ENCODE measurements at regions of chr17 and their contacts with region 1.

Region 1: GRCh38 chr17:8894673-8895578 is 27.5 kb upstream of the PIK3R6 start:
- DNase-seq: peak; percentile 66
- ATAC-seq: peak; percentile 82
- H3K4me3 Mint-ChIP-seq: peak overlapping the region; percentile 70
- H3K27ac Mint-ChIP-seq: no peak overlapping the region
- H3K4me1 Mint-ChIP-seq: peaks cover 17% of the 10 kb centered on the region
- H3K27me3 Mint-ChIP-seq: peaks cover 3% of the 10 kb centered on the region; the same call in 1 of the 2 replicates
- CTCF ChIP-seq: peak; percentile 74

Region 2: DNA sequence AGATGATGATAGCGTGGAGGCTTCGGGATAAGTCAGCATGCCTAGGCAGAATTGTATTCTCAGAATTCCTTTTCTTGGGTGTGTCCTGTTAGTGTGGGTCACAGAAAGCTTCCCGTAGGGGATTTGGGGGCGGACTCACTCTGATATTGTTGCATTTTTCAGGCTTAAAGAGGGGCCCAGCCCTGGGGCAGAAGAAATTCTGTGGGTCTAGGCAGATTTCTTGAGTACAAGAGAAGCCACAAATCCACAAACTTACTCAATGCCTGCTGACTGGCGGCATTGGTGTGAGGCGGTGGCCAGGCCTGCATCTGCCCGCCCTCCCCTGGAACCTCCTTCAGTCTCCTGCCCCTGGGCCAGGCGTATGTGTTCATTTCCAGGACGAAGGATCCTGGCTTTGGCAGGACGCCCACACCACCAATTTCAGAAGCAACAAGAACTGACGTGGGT is 167.8 kb before region 1 on chr17:
- CTCF ChIA-PET with region 1: no interaction called
- POLR2A ChIA-PET with region 1: no interaction called
- DNase-seq: no peak
- ATAC-seq: no peak
- H3K4me3 Mint-ChIP-seq: no peak overlapping the region
- H3K27ac Mint-ChIP-seq: no peak overlapping the region
- H3K4me1 Mint-ChIP-seq: peaks cover 2% of the 10 kb centered on the region; the same call in 1 of the 2 replicates
- H3K27me3 Mint-ChIP-seq: no peaks in the 10 kb centered on the region; the same call in 1 of the 2 replicates
- CTCF ChIP-seq: no peak

Region 3: GRCh38 chr17:8798846-8799569 is 95.9 kb before region 1 on chr17 and contains the start of gene MFSD6L:
- CTCF ChIA-PET with region 1: interaction called, 107 read pairs
- POLR2A ChIA-PET with region 1: interaction called, 5 read pairs
- DNase-seq: peak; percentile 88
- ATAC-seq: peak; percentile 96
- H3K4me3 Mint-ChIP-seq: peak within 1 kb of the TSS; percentile 81
- H3K27ac Mint-ChIP-seq: peak within 1 kb of the TSS; percentile 27; the same call in 1 of the 2 replicates
- H3K4me1 Mint-ChIP-seq: peaks cover 23% of the 10 kb centered on the region
- H3K27me3 Mint-ChIP-seq: peaks cover 4% of the 10 kb centered on the region; the same call in 1 of the 2 replicates
- CTCF ChIP-seq: no peak
- total RNA-seq, gene MFSD6L: 4.0 to 5.2 TPM (median 4.5 TPM) in 3 replicates

Region 4: GRCh38 chr17:8806926-8807550 is 87.9 kb before region 1 on chr17:
- CTCF ChIA-PET with region 1: interaction called, 38 read pairs
- POLR2A ChIA-PET with region 1: no interaction called
- DNase-seq: no peak
- ATAC-seq: no peak
- H3K4me3 Mint-ChIP-seq: no peak overlapping the region
- H3K27ac Mint-ChIP-seq: 0 out of 2 replicates have a peak overlapping the region, but pooled peaks have one; percentile 0
- H3K4me1 Mint-ChIP-seq: peaks cover 13% of the 10 kb centered on the region
- H3K27me3 Mint-ChIP-seq: no peaks in the 10 kb centered on the region; the same call in 1 of the 2 replicates
- CTCF ChIP-seq: no peak

Region 5: DNA sequence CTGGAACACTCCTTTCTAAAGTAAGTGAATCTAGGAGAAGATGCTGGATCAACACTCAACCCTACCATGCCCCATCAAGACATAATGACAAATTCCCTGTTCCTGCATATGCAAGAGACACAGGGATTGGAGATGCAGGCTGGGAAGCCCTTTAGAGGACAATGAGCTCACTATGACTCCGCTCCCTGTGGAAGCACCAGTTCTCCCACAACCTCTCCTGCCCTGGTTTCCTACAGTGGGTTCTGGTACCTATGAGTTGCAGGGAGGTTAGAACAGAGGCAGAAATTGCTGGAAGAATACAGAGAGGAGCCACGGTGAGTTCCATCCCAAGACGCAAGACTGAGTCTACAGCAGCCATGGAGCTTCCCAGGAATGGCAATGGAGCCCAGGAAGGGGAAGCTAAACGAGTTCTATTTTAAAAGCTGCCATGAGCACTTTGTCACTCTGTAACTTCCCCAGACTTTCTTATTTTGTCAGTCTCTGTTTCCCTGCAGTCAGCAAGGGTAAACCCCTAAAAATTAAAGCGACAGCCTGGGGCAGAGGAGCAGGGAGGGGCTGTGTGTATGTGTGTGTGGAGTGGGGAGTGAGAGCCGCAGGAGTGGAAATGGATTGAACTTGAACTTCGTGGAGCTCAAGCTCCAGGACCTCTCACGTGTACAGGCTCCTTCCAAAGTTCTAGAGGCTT is 14.8 kb after region 1 on chr17:
- CTCF ChIA-PET with region 1: interaction called, 12 read pairs
- POLR2A ChIA-PET with region 1: no interaction called
- DNase-seq: no peak
- ATAC-seq: no peak
- H3K4me3 Mint-ChIP-seq: no peak overlapping the region
- H3K27ac Mint-ChIP-seq: no peak overlapping the region
- H3K4me1 Mint-ChIP-seq: no peaks in the 10 kb centered on the region
- H3K27me3 Mint-ChIP-seq: no peaks in the 10 kb centered on the region; the same call in 1 of the 2 replicates
- CTCF ChIP-seq: no peak

Region 6: DNA sequence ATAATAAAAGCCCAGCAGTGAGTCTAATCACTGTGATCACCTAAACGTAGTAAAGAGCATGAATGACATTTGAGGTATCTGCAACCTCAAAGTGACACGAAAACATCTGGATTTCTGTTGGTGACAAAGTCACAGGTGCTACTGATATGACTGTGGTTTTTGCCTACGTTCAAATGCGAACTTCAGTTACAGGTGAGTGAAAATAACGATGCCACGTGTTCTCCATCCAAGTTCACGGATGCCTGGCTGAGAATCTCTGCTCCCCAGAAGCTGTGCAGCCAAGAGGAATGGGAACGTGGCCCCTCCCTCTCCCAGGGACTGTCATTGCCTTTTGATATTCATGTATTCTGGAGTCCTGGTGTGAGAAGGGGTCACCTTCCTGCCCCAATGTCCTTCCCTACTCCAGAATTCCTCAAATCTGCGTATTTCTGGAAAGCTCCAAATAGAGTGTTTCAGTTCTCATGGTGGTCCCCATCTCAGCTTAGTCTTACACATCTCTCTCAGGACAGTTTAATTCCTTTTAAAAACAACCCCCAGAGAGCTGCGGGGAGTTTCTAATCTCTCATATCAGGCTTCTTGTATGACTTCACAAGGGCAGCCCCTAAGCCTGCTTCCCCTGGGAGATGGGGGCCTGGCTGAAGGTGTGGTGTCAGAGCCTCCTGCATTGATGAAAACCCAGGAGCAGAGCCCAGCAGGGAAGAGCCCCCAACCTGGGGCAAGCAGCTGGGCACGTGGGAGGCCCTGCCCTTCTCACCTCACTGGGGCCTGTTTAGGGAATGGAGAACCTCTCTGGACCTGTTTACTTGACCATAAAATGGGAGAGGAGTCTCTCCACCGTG is 44.8 kb after region 1 on chr17:
- CTCF ChIA-PET with region 1: interaction called, 11 read pairs
- POLR2A ChIA-PET with region 1: no interaction called
- DNase-seq: no peak
- ATAC-seq: peak; percentile 47; the same call in 1 of the 2 replicates
- H3K4me3 Mint-ChIP-seq: no peak overlapping the region
- H3K27ac Mint-ChIP-seq: no peak overlapping the region
- H3K4me1 Mint-ChIP-seq: peaks cover 28% of the 10 kb centered on the region
- H3K27me3 Mint-ChIP-seq: no peaks in the 10 kb centered on the region; the same call in 1 of the 2 replicates
- CTCF ChIP-seq: no peak

Region 7: DNA sequence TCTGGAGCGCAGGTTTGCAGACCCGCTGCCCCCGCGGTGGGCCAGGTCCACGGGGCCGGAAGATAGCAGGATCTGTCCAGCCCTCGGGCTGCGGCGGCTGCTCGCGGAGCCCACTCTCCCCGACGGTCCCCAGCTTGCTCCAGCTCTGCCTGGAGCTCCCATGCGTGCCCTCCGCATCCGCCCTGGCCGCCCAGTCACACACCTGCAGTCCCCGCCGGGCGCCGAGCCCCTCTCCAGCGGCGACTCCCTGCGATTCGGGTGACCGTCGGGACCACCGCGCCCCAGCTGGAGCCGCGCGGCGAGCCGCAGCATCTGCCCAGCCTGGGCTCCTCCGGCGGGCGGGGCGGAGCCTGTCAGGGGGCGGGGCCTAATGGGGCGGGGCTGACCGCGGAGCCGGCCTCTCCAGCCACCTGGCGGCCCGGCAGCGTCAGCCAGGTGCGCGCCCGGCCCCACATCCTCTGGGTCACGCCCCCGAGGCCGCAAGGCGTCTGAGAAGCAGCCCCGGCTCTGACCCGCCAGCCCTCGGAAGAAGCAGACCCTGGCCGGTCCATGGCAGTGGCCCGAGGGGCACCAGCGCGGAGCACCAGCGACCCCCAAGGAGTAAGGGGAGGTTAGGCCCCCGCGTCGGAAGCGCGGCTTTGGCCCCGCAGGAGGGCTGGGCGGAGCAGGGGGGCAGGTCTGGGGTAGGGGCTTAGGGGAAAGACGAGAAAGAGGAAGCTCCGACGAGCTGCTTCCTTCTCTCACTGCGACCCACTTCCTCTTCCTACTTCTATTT is 70.7 kb after region 1 on chr17 and contains the start of gene PIK3R5:
- CTCF ChIA-PET with region 1: interaction called, 18 read pairs
- POLR2A ChIA-PET with region 1: no interaction called
- DNase-seq: peak; percentile 92
- ATAC-seq: peak; percentile 95
- H3K4me3 Mint-ChIP-seq: peak within 1 kb of the TSS; percentile 70
- H3K27ac Mint-ChIP-seq: no peak within 1 kb of the TSS
- H3K4me1 Mint-ChIP-seq: peaks cover 9% of the 10 kb centered on the region
- H3K27me3 Mint-ChIP-seq: peaks cover 53% of the 10 kb centered on the region
- CTCF ChIP-seq: no peak
- total RNA-seq, gene PIK3R5: 5.9 to 7.5 TPM (median 5.9 TPM) in 3 replicates

Measured in WTC11 (cell line).